Esophagus muscularis mucosa (tissue), 4 donors: ENCODE measurements at regions of chr12 and their contacts with region 1.

Region 1: DNA sequence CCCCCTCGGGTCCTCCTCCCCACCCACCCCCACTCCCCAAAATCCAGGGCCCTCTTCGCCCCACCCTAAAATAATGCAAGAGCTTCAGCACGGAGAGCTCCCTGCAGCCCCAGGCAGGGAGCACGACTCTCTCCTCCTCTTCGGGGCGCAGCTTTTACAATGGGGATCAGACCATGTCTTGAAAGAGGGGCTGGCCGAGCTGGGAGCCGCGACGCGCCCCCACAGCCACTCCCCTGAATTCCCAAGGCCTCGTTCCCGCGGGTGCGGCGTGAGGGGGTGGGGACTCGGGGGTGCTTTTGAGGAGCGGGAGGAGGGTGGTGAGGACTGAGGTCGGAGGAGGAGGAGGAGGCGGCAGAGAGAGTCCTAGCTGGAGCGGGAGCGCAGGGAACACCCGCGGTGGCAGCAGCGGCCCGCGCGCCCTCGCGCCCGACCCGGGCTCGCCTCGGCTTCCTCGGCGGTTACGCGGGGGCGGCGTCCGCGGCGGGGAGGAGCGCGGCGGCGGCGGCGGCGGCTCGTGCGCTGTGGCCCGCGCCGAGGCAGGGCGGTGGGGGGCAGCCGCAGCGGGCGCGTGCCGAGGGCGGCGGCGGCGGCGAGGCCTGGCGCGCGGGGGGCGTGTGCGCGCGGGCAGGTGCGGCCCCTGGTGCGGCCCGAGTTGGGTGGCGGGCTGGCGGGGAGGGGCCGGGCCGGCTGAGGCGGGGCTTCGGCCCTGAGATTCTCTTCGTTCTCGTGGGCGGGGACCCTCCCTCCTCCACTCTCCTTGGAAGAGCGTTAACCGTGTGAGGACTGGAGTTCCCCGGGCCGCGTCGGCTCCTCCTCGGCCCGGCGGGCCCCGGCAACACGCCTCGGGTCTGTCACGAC is at the start of gene ANKS1B:
- DNase-seq: peak; percentile 68
- H3K4me3 ChIP-seq: peak within 1 kb of the TSS; percentile 64 to 80 (median 70)
- H3K27ac ChIP-seq: peak within 1 kb of the TSS; percentile 76 to 86 (median 83)
- H3K4me1 ChIP-seq: peaks cover 0 to 27% (median 25%) of the 10 kb centered on the region in 4 donors
- H3K27me3 ChIP-seq: no peaks in the 10 kb centered on the region
- CTCF ChIP-seq: no peak
- EP300 ChIP-seq: no peak
- POLR2A ChIP-seq: no peak
- total RNA-seq, gene ANKS1B: 20.4 to 28.7 (median 21.6) TPM

Region 2: DNA sequence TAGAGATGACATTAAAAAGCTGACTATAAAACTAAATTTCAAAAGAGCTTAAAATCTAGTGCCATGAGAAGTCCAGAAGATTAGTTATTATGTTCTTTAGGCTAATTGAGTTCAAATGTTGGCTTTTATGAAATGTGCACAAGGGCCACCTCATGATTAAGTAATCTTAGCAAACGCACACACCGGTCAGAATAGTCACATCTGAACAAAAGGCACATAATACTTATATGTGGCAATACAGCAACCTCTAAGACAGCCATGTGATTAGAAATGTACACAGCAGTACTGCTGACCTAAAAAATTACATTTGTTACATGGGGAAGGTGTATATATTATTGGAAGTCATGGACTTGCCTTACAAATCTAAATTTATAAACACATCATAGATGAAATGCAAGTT is 681.6 kb before region 1 on chr12:
- intact Hi-C with region 1: no loop called
- DNase-seq: no peak
- H3K4me3 ChIP-seq: no peak overlapping the region
- H3K27ac ChIP-seq: no peak overlapping the region
- H3K4me1 ChIP-seq: no peaks in the 10 kb centered on the region
- H3K27me3 ChIP-seq: no peaks in the 10 kb centered on the region
- CTCF ChIP-seq: no peak
- EP300 ChIP-seq: no peak
- POLR2A ChIP-seq: no peak

Region 3: DNA sequence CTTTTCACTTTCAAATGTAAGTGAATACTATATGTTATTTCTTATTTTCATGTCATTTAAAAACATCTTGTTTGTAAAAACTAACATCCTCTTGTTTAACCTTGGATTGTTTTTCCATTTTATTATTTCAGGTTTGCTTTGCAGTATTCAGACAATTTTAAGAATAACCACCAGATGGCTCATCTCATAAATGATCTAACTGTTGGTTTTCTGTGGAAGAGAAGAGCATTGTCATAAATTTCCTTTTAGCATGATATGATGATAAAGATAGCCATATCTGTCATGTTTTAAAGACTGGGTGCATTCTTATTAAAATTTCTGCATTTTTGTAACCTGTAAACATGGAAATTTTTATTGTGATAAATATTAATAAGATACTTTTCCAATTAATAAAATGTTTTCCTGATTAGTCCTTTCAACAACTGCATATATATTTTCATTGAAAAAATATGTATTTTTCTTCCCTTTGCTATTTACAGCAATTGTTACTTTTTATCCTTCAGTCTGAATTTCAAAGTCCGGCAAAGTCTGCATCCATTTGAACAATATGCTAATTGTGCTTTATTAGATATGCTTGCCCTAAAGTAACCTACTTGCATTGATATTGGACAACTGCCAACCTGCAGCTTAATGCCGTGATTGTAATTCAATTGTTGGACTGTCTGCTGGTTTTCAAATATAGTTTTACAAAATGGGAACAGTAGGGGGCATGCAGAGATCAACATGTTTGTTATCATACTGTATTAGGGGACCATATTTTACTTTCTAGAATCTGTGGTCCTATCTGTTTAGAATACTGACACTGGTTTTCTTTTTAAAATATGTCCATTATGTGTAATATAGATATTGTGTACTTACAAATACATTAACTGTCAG is 173.5 kb before region 1 on chr12:
- intact Hi-C with region 1: loop called (anchors 5 kb)
- DNase-seq: no peak
- H3K4me3 ChIP-seq: no peak overlapping the region
- H3K27ac ChIP-seq: no peak overlapping the region
- H3K4me1 ChIP-seq: peaks cover 0 to 5% (median 2%) of the 10 kb centered on the region in 4 donors
- H3K27me3 ChIP-seq: no peaks in the 10 kb centered on the region
- CTCF ChIP-seq: peak; percentile 49 to 58 (median 56)
- EP300 ChIP-seq: no peak
- POLR2A ChIP-seq: no peak

Region 4: GRCh38 chr12:99915251-99916082 is 69.0 kb before region 1 on chr12:
- intact Hi-C with region 1: loop called (anchors 5 kb)
- DNase-seq: no peak
- H3K4me3 ChIP-seq: no peak overlapping the region
- H3K27ac ChIP-seq: no peak overlapping the region
- H3K4me1 ChIP-seq: peaks cover 0 to 23% (median 18%) of the 10 kb centered on the region in 4 donors
- H3K27me3 ChIP-seq: no peaks in the 10 kb centered on the region
- CTCF ChIP-seq: no peak
- EP300 ChIP-seq: no peak
- POLR2A ChIP-seq: no peak